ENCODE measurements at regions of chr1 and their contacts with region 1.

Region 1: GRCh38 chr1:44036409-44037139 is 5.3 kb upstream of the SLC6A9 start:
- DNase-seq: peak; percentile 71
- CTCF ChIP-seq: peak; percentile 92

Region 2: DNA sequence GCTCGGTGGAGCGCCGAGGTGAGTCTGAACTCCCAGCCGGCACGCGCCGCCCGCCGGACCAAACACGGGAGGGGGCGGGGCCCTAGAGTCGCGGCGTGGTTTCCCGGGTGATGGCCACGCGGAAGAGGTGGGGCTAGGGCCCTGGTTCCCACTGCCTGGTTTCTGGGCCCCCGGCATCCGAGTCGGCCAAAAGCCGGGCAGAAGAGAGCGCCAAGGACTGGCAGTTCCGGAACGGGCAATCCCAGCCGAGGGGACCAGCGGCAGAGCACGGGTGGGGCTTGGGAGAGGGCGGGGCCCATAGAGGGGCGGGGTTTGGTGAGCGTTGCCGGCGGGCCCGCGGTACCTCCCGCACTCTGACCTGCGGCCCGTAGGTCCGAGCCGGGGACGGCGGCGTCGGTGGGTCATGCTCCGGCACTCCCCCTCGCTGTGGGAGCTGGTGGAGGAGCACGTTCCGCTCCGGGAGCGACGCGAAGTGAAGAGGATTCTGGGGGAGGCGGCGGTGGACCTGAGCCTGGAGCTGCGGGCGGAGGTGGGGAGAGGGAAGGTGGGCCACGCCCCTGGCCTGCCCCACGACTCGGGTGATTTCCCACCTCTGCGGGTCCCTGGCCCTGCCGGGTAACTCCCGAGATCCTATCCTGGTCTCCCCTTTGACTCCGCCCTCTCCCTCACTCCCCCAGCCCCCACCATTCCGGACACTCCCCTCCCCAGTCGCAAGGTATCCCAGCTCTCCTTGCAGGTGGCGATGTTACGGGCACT is 44.9 kb before region 1 on chr1 and contains the start of gene CCDC24:
- CTCF ChIA-PET with region 1: interaction called, 23 read pairs
- POLR2A ChIA-PET with region 1: no interaction called
- DNase-seq: peak; percentile 90
- CTCF ChIP-seq: no peak

Region 3: GRCh38 chr1:44012941-44013609 is 23.5 kb before region 1 on chr1:
- CTCF ChIA-PET with region 1: interaction called, 22 read pairs
- POLR2A ChIA-PET with region 1: no interaction called
- DNase-seq: no peak
- CTCF ChIP-seq: no peak

Region 4: GRCh38 chr1:44021581-44022321 is 14.8 kb before region 1 on chr1:
- CTCF ChIA-PET with region 1: interaction called, 17 read pairs
- POLR2A ChIA-PET with region 1: no interaction called
- DNase-seq: no peak
- CTCF ChIP-seq: no peak

Region 5: GRCh38 chr1:44057293-44057692 is 20.7 kb after region 1 on chr1:
- CTCF ChIA-PET with region 1: interaction called, 12 read pairs
- POLR2A ChIA-PET with region 1: no interaction called
- DNase-seq: no peak
- CTCF ChIP-seq: no peak